Heart left ventricle (tissue), 16 donors: ENCODE measurements at regions of chr13 and their contacts with region 1.

Region 1: GRCh38 chr13:75876360-75877050 is 240.4 kb downstream of the LMO7 start:
- DNase-seq: peak in 4 of 5 donors; percentile 39 to 49 (median 44)
- ATAC-seq: peak; percentile 83 to 92 (median 86)
- H3K4me3 ChIP-seq: no peak overlapping the region
- H3K27ac ChIP-seq: no peak overlapping the region
- H3K4me1 ChIP-seq: peaks cover 0 to 8% (median 0%) of the 10 kb centered on the region in 12 donors
- H3K27me3 ChIP-seq: no peaks in the 10 kb centered on the region
- CTCF ChIP-seq: peak; percentile 86 to 96 (median 92)
- POLR2A ChIP-seq: no peak

Region 2: DNA sequence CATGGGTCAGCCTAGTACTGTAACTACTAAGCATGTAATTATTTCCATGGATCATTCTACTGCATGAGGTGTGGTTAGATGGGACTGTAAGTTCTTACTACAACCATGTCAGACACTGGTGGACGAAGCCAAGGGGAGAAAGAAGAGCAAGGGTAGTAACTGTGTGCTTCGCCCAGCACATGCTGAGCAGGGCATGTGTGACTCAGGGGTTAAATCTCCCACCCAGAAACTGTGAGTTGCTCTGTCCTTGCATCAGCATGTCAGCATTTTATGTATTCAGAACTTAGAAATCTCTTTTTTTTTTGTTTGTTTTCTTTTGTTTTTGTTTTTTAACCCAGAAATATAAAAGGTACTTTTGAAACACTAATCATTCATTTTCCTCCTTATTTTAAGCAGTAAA is 1305.7 kb before region 1 on chr13:
- intact Hi-C with region 1: no loop called
- DNase-seq: no peak
- ATAC-seq: no peak
- H3K4me3 ChIP-seq: no peak overlapping the region
- H3K27ac ChIP-seq: no peak overlapping the region
- H3K4me1 ChIP-seq: peaks cover 0 to 10% (median 7%) of the 10 kb centered on the region in 12 donors
- H3K27me3 ChIP-seq: no peaks in the 10 kb centered on the region
- CTCF ChIP-seq: no peak
- POLR2A ChIP-seq: no peak

Region 3: GRCh38 chr13:76016799-76017400 is 140.4 kb after region 1 on chr13:
- intact Hi-C with region 1: loop called in 9 of 10 experiments (anchors 2 to 10 kb)
- DNase-seq: no peak
- ATAC-seq: peak in 1 of 4 donors; percentile 46
- H3K4me3 ChIP-seq: no peak overlapping the region
- H3K27ac ChIP-seq: no peak overlapping the region
- H3K4me1 ChIP-seq: peaks cover 0 to 21% (median 8%) of the 10 kb centered on the region in 12 donors
- H3K27me3 ChIP-seq: no peaks in the 10 kb centered on the region
- CTCF ChIP-seq: peak in 11 of 12 donors; percentile 17 to 53 (median 33)
- POLR2A ChIP-seq: no peak

Region 4: GRCh38 chr13:76225815-76226489 is 349.4 kb after region 1 on chr13:
- intact Hi-C with region 1: loop called in 2 of 10 experiments (anchors 10 kb)
- DNase-seq: peak; percentile 42 to 77 (median 52)
- ATAC-seq: peak; percentile 91 to 97 (median 95)
- H3K4me3 ChIP-seq: no peak overlapping the region
- H3K27ac ChIP-seq: peak overlapping the region in 2 of 12 donors; percentile 22 to 46
- H3K4me1 ChIP-seq: peaks cover 0 to 14% (median 3%) of the 10 kb centered on the region in 12 donors
- H3K27me3 ChIP-seq: no peaks in the 10 kb centered on the region
- CTCF ChIP-seq: no peak
- POLR2A ChIP-seq: no peak

Region 5: GRCh38 chr13:76654263-76654662 is 777.8 kb after region 1 on chr13:
- intact Hi-C with region 1: loop called in 1 of 10 experiments (anchors 5 kb)
- DNase-seq: no peak
- ATAC-seq: no peak
- H3K4me3 ChIP-seq: no peak overlapping the region
- H3K27ac ChIP-seq: no peak overlapping the region
- H3K4me1 ChIP-seq: peaks cover 0 to 13% (median 0%) of the 10 kb centered on the region in 12 donors
- H3K27me3 ChIP-seq: no peaks in the 10 kb centered on the region
- CTCF ChIP-seq: no peak
- POLR2A ChIP-seq: no peak

Region 6: GRCh38 chr13:76667551-76667950 is 791.0 kb after region 1 on chr13:
- intact Hi-C with region 1: loop called in 1 of 10 experiments (anchors 10 kb)
- DNase-seq: peak in 2 of 5 donors; percentile 24 to 26
- ATAC-seq: peak in 3 of 4 donors; percentile 57 to 71 (median 63)
- H3K4me3 ChIP-seq: no peak overlapping the region
- H3K27ac ChIP-seq: no peak overlapping the region
- H3K4me1 ChIP-seq: peaks cover 0 to 31% (median 0%) of the 10 kb centered on the region in 12 donors
- H3K27me3 ChIP-seq: no peaks in the 10 kb centered on the region
- CTCF ChIP-seq: peak in 11 of 12 donors; percentile 8 to 60 (median 38)
- POLR2A ChIP-seq: no peak

Region 7: DNA sequence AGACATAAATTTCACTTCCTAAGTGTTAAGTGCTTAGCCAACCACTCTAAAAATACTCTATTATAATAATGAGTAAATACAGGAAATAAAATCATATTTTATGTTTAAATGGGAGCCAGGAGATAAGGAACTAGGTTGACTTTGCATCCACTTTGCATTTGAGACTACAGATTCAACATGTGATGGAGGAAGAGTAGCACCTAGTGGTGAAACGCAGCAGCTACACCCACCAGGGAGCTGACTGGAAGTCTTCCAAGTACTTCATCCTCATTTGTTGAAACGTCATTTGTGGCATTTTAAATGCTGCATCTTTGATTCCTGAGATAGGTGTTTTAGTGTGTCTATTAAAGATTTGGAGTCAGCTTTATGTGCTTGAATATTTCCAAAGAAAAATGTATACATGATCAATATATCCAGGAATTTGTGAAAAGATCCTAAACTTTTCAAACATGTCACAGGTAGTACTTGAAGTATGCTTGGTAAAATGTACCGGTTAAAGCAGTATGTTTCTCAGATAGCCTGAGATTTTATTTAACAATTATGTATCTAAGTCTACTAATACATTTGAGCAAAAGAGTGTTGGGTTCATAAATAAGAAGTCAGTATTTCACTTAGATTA is 1027.1 kb after region 1 on chr13:
- intact Hi-C with region 1: loop called (anchors 2 to 5 kb)
- DNase-seq: peak; percentile 47 to 67 (median 54)
- ATAC-seq: peak; percentile 64 to 83 (median 79)
- H3K4me3 ChIP-seq: no peak overlapping the region
- H3K27ac ChIP-seq: no peak overlapping the region
- H3K4me1 ChIP-seq: no peaks in the 10 kb centered on the region
- H3K27me3 ChIP-seq: peaks cover 0 to 3% (median 0%) of the 10 kb centered on the region in 9 donors
- CTCF ChIP-seq: peak; percentile 95 to 100 (median 99)
- POLR2A ChIP-seq: no peak

Region 8: GRCh38 chr13:76980075-76980718 is 1103.7 kb after region 1 on chr13:
- intact Hi-C with region 1: loop called in 8 of 10 experiments (anchors 2 to 10 kb)
- DNase-seq: peak; percentile 72 to 92 (median 79)
- ATAC-seq: peak; percentile 91 to 98 (median 94)
- H3K4me3 ChIP-seq: peak overlapping the region in 10 of 12 donors; percentile 20 to 50 (median 33)
- H3K27ac ChIP-seq: no peak overlapping the region
- H3K4me1 ChIP-seq: peaks cover 0 to 11% (median 2%) of the 10 kb centered on the region in 12 donors
- H3K27me3 ChIP-seq: peaks cover 0 to 38% (median 6%) of the 10 kb centered on the region in 9 donors
- CTCF ChIP-seq: peak; percentile 93 to 100 (median 96)
- POLR2A ChIP-seq: no peak